ENCODE measurements at regions of chr5 and their contacts with region 1.

Region 1: GRCh38 chr5:125149527-125149926 is 403.1 kb upstream of the ZNF608 start:
- DNase-seq: no peak
- ATAC-seq: no peak
- H3K4me3 ChIP-seq: no peak overlapping the region
- H3K27ac ChIP-seq: no peak overlapping the region
- H3K4me1 ChIP-seq: no peaks in the 10 kb centered on the region
- H3K27me3 ChIP-seq: peaks cover 0 to 1% of the 10 kb centered on the region in 2 donors

Region 2: GRCh38 chr5:125835293-125836172 is 686.0 kb after region 1 on chr5:
- intact Hi-C with region 1: loop called in 1 of 2 experiments (anchors 5 kb)
- DNase-seq: no peak
- ATAC-seq: peak; percentile 73
- H3K4me3 ChIP-seq: no peak overlapping the region
- H3K27ac ChIP-seq: no peak overlapping the region
- H3K4me1 ChIP-seq: no peaks in the 10 kb centered on the region
- H3K27me3 ChIP-seq: no peaks in the 10 kb centered on the region